ENCODE measurements at regions of chr9 and their contacts with region 1.

Region 1: GRCh38 chr9:34437006-34437925 is 21.1 kb downstream of the FAM219A start:
- DNase-seq: peak; percentile 39
- ATAC-seq: peak; percentile 97
- H3K4me3 ChIP-seq: no peak overlapping the region
- H3K27ac ChIP-seq: no peak overlapping the region
- H3K4me1 ChIP-seq: no peaks in the 10 kb centered on the region
- H3K27me3 ChIP-seq: no peaks in the 10 kb centered on the region
- CTCF ChIP-seq: peak; percentile 90

Region 2: GRCh38 chr9:34454571-34455065 is 17.4 kb after region 1 on chr9:
- CTCF ChIA-PET with region 1: interaction called, 8 read pairs
- POLR2A ChIA-PET with region 1: interaction called, 12 read pairs
- in situ Hi-C with region 1: no loop called
- intact Hi-C with region 1: no loop called
- DNase-seq: no peak
- ATAC-seq: no peak
- H3K4me3 ChIP-seq: no peak overlapping the region
- H3K27ac ChIP-seq: no peak overlapping the region
- H3K4me1 ChIP-seq: peaks cover 11% of the 10 kb centered on the region
- H3K27me3 ChIP-seq: no peaks in the 10 kb centered on the region
- CTCF ChIP-seq: peak; percentile 43; the same call in 1 of the 2 replicates

Region 3: GRCh38 chr9:34500623-34501267 is 63.5 kb after region 1 on chr9:
- CTCF ChIA-PET with region 1: interaction called, 4 read pairs
- POLR2A ChIA-PET with region 1: no interaction called
- in situ Hi-C with region 1: no loop called
- intact Hi-C with region 1: loop called (anchors 1 kb)
- DNase-seq: peak; percentile 62
- ATAC-seq: peak; percentile 80
- H3K4me3 ChIP-seq: no peak overlapping the region
- H3K27ac ChIP-seq: no peak overlapping the region
- H3K4me1 ChIP-seq: peaks cover 14% of the 10 kb centered on the region
- H3K27me3 ChIP-seq: no peaks in the 10 kb centered on the region
- CTCF ChIP-seq: peak; percentile 99

Region 4: DNA sequence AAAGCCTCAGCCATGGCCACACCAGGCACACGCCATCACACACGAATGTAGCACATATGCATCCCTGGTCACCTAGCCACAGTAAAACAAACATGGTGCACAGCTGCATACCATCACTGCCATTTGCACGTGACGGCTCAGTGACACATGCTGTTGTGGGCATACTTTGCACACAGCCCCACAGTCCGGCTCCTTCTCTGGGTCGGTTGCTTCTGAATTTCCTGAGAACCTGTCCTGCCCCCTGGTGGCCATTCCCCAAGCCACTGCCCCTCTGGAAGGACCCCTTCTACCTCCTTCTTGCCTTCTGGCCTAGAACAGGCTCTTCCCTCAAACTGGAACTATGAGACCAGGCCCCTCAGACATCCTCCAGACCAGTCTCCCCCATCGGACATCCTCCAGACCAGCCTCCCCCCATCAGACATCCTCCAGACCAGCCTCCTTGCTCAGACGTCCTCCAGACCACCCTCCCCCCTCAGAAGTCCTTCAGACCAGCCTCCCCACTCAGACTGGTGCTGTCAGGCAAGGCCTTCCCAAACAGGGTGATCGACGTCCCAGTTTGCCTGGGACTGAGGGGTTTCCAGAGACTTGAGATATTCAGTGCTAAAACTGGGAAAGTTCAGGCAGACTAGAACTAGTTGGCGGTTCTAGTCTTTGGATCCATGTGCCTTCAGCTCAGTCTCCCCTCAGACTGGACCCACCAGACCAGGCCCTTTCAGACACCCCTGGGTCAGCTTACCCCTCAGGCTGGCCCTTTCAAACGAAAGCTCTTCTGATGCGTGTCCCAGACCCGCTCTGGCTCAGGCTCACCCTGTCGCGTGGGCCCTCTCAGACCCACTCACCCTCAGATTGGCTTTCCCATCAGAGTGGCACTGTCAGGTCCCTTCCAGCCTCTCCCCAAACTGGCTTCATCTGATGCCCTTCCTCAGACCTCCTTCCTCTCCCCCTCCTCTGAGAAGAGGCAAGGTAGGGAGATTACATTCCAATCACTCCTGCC is 109.9 kb after region 1 on chr9:
- CTCF ChIA-PET with region 1: interaction called, 6 read pairs
- POLR2A ChIA-PET with region 1: no interaction called
- in situ Hi-C with region 1: no loop called
- intact Hi-C with region 1: loop called (anchors 2 kb)
- DNase-seq: no peak
- ATAC-seq: peak; percentile 75
- H3K4me3 ChIP-seq: no peak overlapping the region
- H3K27ac ChIP-seq: no peak overlapping the region
- H3K4me1 ChIP-seq: no peaks in the 10 kb centered on the region
- H3K27me3 ChIP-seq: 0 out of 2 replicates have a peak, but pooled peaks cover 2% of the 10 kb centered on the region
- CTCF ChIP-seq: no peak

Region 5: DNA sequence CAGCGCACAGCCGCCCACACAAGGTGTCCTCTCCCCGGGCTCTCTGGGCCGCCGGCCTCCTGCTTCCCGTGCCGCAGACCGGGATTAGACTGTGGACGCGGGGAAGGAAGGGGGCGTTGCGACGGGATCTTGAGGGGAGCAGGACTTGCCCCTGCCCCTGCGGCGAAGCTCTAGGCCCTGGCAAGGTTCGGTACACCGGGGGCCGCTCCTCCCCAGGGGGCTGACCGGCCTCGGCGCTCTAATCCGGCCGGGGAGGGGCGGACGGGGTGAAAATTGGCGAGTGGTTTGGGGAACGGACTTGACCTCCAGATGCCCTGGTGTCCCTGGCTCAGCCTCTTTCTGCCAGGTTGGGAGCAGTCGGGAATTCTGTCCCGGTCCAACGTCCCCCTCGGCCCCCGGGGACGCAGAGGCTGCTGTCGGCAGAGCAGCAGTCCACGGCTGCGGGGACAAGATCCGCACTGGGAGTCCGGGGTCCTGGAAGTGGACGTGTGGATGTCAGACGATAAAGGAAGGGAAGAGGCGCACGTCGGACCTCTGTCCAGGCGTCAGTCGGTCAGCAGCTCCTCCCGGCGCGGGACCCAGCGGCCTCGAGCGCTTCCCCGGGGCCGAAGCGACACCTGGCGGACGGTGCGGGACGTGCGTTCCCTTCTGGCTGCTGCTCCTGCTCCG is 154.1 kb after region 1 on chr9:
- CTCF ChIA-PET with region 1: interaction called, 6 read pairs
- POLR2A ChIA-PET with region 1: no interaction called
- in situ Hi-C with region 1: no loop called
- intact Hi-C with region 1: loop called (anchors 1 kb)
- DNase-seq: peak; percentile 33
- ATAC-seq: peak; percentile 91
- H3K4me3 ChIP-seq: peak overlapping the region in 1 of 2 experiments; percentile 17; a peak in 1 of 4 replicates
- H3K27ac ChIP-seq: no peak overlapping the region
- H3K4me1 ChIP-seq: peaks cover 10% of the 10 kb centered on the region
- H3K27me3 ChIP-seq: peaks cover 6% of the 10 kb centered on the region
- CTCF ChIP-seq: no peak

Measured in Panc1 (cell line).